Transverse colon (tissue), 4 donors: ENCODE measurements at regions of chr21 and their contacts with region 1.

Region 1: DNA sequence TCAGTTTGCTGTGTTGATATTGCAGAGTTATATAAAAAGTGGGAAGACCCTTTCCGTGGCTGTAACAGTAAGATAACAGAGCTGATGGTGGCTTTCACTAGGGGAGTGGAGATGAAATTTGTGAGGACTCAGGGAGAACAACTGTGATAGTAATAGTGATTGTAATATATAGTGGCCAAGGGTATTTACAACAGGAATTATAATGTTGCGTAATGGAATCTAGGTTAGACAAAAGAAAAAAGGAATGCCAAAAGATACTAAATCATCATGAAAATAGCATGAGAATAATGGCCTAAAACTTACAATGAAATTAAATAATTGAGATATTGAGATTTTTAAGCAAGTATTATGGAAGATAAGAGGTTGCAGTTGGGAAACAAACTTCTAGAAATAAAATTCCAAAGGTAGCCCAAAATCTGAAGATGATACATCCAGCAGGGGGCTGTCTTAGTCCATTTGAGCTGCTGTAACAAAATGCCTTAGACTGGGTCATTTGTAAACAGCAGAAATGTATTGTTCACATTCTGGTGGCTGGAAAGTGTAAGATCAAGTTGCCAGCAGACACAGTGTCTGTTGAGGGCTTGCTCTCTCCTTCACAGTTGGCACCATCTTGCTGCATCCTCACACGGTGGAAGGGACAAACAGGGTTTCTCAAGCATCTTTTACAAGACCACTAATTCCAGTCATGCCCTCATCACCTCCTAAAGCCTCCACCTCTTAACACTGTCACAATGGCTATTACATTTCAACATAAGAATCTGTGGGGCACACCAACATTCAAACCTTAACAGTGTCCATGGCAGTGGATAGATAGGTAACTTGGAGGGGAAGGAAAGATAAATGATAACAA is 711.2 kb downstream of the MRPL39 start:
- DNase-seq: peak; percentile 19
- H3K4me3 ChIP-seq: no peak overlapping the region
- H3K27ac ChIP-seq: no peak overlapping the region
- H3K4me1 ChIP-seq: no peaks in the 10 kb centered on the region
- H3K27me3 ChIP-seq: no peaks in the 10 kb centered on the region
- CTCF ChIP-seq: peak; percentile 16 to 45 (median 38)
- EP300 ChIP-seq: no peak
- POLR2A ChIP-seq: no peak

Region 2: DNA sequence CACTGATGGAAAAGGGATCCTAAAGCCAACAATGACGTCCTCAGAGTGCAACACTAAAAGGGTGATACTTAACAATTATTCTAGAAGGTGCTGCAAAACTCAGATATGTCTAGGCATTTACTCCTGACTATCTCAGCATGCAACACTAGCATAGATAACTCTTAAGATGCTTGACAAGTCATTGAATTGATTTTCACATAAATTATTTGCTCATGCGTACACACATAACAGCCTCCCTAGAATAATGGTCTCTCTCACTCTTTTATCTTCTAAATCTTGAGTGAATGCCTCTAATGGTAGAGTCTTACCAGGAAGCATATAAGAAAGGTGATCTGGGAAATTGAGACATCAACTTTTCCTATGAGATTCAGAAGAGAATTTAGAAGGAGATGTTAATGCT is 572.6 kb before region 1 on chr21:
- in situ Hi-C with region 1: no loop called
- intact Hi-C with region 1: no loop called
- DNase-seq: no peak
- H3K4me3 ChIP-seq: no peak overlapping the region
- H3K27ac ChIP-seq: no peak overlapping the region
- H3K4me1 ChIP-seq: no peaks in the 10 kb centered on the region
- H3K27me3 ChIP-seq: no peaks in the 10 kb centered on the region
- CTCF ChIP-seq: no peak
- EP300 ChIP-seq: no peak
- POLR2A ChIP-seq: no peak

Region 3: DNA sequence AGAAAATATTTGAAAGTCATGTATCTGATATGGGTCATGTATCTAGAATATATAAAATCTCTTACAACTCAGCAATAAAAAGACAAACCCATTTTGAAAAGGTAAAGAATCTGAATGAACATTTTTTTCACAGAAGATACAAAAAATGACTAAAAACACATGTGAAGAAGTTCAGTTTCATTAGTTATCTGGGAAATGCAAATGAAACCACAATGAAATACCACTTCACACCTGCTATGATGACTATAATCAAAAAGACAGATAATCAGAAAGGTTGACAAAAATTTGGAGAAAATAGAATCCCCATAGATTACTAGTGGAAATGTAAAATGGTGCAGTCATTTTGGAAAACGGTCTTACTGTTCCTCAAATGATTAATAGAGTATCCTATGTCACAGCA is 80.1 kb after region 1 on chr21:
- in situ Hi-C with region 1: no loop called
- intact Hi-C with region 1: no loop called
- DNase-seq: no peak
- H3K4me3 ChIP-seq: no peak overlapping the region
- H3K27ac ChIP-seq: no peak overlapping the region
- H3K4me1 ChIP-seq: no peaks in the 10 kb centered on the region
- H3K27me3 ChIP-seq: no peaks in the 10 kb centered on the region
- CTCF ChIP-seq: no peak
- EP300 ChIP-seq: no peak
- POLR2A ChIP-seq: no peak

Region 4: DNA sequence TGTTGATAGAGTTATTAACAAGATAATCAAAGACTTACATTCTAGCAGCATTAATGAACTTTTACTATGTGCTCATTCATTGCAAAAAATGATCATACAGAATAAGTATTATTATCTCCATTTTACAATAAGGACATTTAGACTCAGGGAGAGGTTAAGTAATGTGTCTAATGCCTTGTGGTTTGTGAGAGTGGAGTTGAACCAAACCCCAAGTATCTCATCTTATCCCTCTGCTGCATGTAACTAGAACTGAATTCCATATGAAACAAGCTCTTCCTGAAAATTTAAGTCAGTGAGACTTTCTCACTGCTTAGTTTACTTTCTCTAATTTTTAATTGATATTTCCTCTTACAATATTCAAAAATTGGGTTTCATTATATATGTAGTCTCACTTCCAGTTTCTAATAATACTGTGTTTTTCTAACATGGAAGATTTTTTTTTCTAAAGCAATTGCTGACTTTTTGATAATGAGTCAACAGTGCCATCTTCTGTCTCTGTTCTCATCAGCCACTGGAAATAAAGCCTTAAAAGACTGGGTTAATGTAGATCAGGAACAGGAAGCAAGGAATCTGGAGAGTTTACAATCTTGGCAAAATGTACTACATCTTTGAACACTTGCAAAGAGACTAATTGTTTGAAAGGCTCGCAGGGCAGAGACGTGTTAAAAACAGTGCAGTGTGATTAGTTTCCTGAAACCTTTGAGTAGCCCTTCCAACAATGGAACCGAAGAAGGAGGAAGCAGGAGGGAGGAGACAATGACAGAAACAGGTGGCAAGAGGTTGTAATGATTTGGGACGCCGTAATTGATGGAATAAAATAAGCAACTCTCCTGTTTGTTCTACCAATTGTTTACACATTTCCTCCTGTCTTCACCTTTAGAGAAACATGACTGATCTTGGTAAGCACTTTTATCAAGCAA is 143.6 kb after region 1 on chr21:
- in situ Hi-C with region 1: loop called in 1 of 4 experiments (anchors 10 kb)
- intact Hi-C with region 1: no loop called
- DNase-seq: no peak
- H3K4me3 ChIP-seq: peak overlapping the region in 1 of 4 donors; percentile 10
- H3K27ac ChIP-seq: no peak overlapping the region
- H3K4me1 ChIP-seq: no peaks in the 10 kb centered on the region
- H3K27me3 ChIP-seq: no peaks in the 10 kb centered on the region
- CTCF ChIP-seq: peak; percentile 20 to 48 (median 33)
- EP300 ChIP-seq: no peak
- POLR2A ChIP-seq: no peak

Region 5: DNA sequence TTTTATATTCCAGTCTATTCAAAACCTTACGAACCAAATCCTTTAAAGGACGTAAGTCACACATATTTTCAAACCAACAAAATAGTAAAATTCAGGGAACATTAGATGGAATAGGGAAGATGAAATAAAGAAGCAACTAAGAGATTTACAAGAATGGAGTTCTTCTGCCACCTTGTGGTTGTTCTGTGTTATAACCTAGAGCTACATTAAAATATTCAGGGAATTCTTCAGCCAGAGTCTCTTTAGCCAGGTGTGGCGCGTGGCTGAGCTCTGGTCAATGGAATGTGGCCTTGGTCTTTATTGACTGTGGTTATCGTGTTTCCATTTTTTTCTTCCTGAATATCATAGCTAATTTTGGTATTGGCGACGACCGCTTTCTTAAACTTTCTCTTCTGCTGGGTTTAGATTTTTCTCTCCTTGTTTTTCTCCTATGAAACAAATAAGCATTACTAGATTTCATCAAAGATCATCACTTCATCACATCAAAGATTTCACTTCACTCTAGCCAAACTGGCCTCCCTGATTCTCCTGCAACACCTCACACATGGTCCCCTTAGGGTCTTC is 489.9 kb after region 1 on chr21:
- in situ Hi-C with region 1: loop called in 1 of 4 experiments (anchors 25 kb)
- intact Hi-C with region 1: no loop called
- DNase-seq: no peak
- H3K4me3 ChIP-seq: no peak overlapping the region
- H3K27ac ChIP-seq: no peak overlapping the region
- H3K4me1 ChIP-seq: no peaks in the 10 kb centered on the region
- H3K27me3 ChIP-seq: no peaks in the 10 kb centered on the region
- CTCF ChIP-seq: peak; percentile 63 to 86 (median 80)
- EP300 ChIP-seq: no peak
- POLR2A ChIP-seq: no peak

Region 6: GRCh38 chr21:25405984-25406383 is 509.9 kb after region 1 on chr21:
- in situ Hi-C with region 1: no loop called
- intact Hi-C with region 1: no loop called
- DNase-seq: no peak
- H3K4me3 ChIP-seq: no peak overlapping the region
- H3K27ac ChIP-seq: no peak overlapping the region
- H3K4me1 ChIP-seq: no peaks in the 10 kb centered on the region
- H3K27me3 ChIP-seq: no peaks in the 10 kb centered on the region
- CTCF ChIP-seq: no peak
- EP300 ChIP-seq: no peak
- POLR2A ChIP-seq: no peak